ENCODE measurements at regions of chr20 and their contacts with region 1.

Region 1: GRCh38 chr20:21615617-21616080 is 89.8 kb upstream of the PAX1 start:
- DNase-seq: peak; percentile 65 to 78
- H3K4me3 ChIP-seq: no peak overlapping the region
- H3K27ac ChIP-seq: no peak overlapping the region
- H3K4me1 ChIP-seq: no peaks in the 10 kb centered on the region
- H3K27me3 ChIP-seq: no peaks in the 10 kb centered on the region
- CTCF ChIP-seq: peak; percentile 27 to 83 (median 54)
- POLR2A ChIP-seq: no peak

Region 2: GRCh38 chr20:20843982-20844381 is 771.7 kb before region 1 on chr20:
- intact Hi-C with region 1: loop called (anchors 10 kb)
- DNase-seq: peak; percentile 16 to 31
- H3K4me3 ChIP-seq: no peak overlapping the region
- H3K27ac ChIP-seq: no peak overlapping the region
- H3K4me1 ChIP-seq: no peaks in the 10 kb centered on the region
- H3K27me3 ChIP-seq: no peaks in the 10 kb centered on the region
- CTCF ChIP-seq: no peak
- POLR2A ChIP-seq: no peak

Region 3: GRCh38 chr20:21729316-21729715 is 113.7 kb after region 1 on chr20:
- intact Hi-C with region 1: no loop called
- DNase-seq: no peak
- H3K4me3 ChIP-seq: no peak overlapping the region
- H3K27ac ChIP-seq: no peak overlapping the region
- H3K4me1 ChIP-seq: peaks cover 7 to 23% of the 10 kb centered on the region in 2 donors
- H3K27me3 ChIP-seq: no peaks in the 10 kb centered on the region
- CTCF ChIP-seq: no peak
- POLR2A ChIP-seq: no peak

Measured in thyroid gland (tissue), 4 donors.